ENCODE measurements at regions of chrX and their contacts with region 1.

Region 1: DNA sequence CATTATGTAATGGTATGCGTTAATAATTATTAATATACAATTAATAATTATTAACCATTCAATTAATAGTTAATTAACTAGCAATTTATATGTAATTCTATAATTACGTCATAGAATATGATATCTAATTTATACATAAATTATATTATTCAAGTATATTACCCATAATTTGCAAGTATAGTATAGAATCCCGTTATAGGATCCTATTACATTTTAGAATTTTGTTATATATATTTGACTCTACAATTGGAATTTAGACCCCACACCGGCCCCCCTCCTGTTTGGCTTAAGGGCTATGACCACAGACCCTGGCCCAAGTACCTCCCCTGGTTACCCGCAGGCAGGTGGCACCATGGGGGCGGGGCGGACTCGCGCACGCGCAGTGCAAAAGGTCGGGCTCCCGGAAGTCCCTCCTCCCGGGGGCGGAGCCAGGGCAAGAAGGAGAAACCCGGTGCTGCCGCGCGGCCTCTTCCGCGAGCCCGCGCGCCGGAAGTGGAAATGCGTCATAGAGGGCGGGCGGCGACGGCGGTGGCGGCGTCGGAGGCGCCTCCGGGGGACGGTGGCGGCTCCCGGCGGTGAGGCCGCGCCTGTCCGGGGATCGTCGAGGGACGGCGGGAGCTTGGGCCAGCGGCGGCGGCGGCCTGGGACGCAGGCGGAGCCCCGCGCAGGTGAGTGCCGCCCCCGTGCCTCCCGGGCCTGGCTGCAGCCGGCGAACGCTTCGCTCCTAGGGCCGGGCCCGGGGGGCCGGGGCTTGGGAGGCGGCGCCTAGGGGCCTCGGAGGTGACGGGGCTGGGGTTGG is at the start of gene AKAP17A:
- DNase-seq: peak; percentile 95
- H3K4me3 ChIP-seq: peak within 1 kb of the TSS; percentile 73 to 91
- H3K27ac ChIP-seq: peak within 1 kb of the TSS; percentile 89 to 90
- H3K4me1 ChIP-seq: peaks cover 14% of the 10 kb centered on the region
- H3K27me3 ChIP-seq: no peaks in the 10 kb centered on the region
- CTCF ChIP-seq: no peak
- POLR2A ChIP-seq: peak; percentile 38
- total RNA-seq, gene AKAP17A: 108 to 113 TPM

Region 2: GRCh38 chrX:1453951-1454785 is 137.1 kb before region 1 on chrX:
- intact Hi-C with region 1: loop called (anchors 10 kb)
- DNase-seq: peak; percentile 89
- H3K4me3 ChIP-seq: peak overlapping the region; percentile 41 to 68
- H3K27ac ChIP-seq: peak overlapping the region in 1 of 2 donors; percentile 96
- H3K4me1 ChIP-seq: peaks cover 16% of the 10 kb centered on the region
- H3K27me3 ChIP-seq: no peaks in the 10 kb centered on the region
- CTCF ChIP-seq: peak; percentile 90 to 94 (median 92)
- POLR2A ChIP-seq: no peak

Region 3: DNA sequence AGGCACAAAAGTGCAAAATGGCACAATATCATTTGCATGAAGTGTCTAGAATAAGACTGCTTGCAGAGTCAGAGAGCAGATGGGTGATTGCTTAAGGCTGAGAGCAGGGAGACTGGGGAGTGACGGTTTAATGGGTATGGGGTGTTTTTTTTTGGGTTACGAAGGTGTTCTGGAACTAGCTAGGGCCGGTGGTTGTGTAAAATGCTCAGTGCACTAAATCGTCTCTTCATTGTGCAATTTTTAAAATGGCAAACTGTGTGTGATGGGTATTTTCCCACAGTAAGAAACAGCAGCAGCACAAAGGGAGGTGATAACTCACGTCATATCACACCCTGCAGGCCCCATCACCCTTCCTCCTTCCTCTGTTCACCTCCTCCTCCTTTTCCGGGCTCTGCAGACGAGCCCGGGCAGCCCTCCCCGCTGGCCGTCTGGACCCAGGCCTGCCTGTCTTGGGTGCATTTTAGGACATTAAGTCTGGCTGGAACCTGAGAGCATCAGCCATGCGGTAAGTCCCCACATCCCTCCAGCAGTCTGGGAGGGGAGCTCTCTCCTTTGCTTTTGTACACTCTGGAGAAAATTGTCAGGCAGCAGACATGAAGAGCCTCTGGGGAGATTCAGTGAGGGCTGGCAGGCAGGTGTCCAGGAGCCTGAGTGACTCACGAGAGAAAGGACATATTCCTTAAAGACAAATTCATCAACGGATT is 66.2 kb after region 1 on chrX:
- intact Hi-C with region 1: no loop called
- DNase-seq: peak; percentile 22
- H3K4me3 ChIP-seq: no peak overlapping the region
- H3K27ac ChIP-seq: no peak overlapping the region
- H3K4me1 ChIP-seq: peaks cover 10% of the 10 kb centered on the region
- H3K27me3 ChIP-seq: no peaks in the 10 kb centered on the region
- CTCF ChIP-seq: no peak
- POLR2A ChIP-seq: no peak

Measured in testis (tissue), 5 donors.